Endothelial cell of umbilical vein (primary cell): ENCODE measurements at regions of chr4 and their contacts with region 1.

Region 1: GRCh38 chr4:145380123-145380522 is 101.5 kb upstream of the SMAD1 start:
- DNase-seq: no peak
- H3K4me3 ChIP-seq: no peak overlapping the region
- H3K27ac ChIP-seq: no peak overlapping the region
- H3K4me1 ChIP-seq: no peaks in the 10 kb centered on the region
- H3K27me3 ChIP-seq: no peaks in the 10 kb centered on the region
- CTCF ChIP-seq: no peak
- POLR2A ChIP-seq: no peak

Region 2: GRCh38 chr4:145340071-145340675 is 40.0 kb before region 1 on chr4:
- CTCF ChIA-PET with region 1: no interaction called
- POLR2A ChIA-PET with region 1: no interaction called
- dilution Hi-C with region 1: no loop called
- intact Hi-C with region 1: loop called (anchors 5 kb)
- DNase-seq: no peak
- H3K4me3 ChIP-seq: no peak overlapping the region
- H3K27ac ChIP-seq: no peak overlapping the region
- H3K4me1 ChIP-seq: peaks cover 11% of the 10 kb centered on the region
- H3K27me3 ChIP-seq: no peaks in the 10 kb centered on the region
- CTCF ChIP-seq: no peak
- POLR2A ChIP-seq: no peak